Activated T-helper 1 cell treated with anti-CD3 and anti-CD28 coated beads, Interleukin-12 subunit alpha, Interleukin-12 subunit beta, Interleukin-2, Interleukin-4 antibody, amounts not matched to agents 30 ng/mL and 10 ng/mL and 1 ng/mL, durations not matched to agents 14 hours and 24 hours and 36 hours (primary cell): ENCODE measurements at regions of chrX and their contacts with region 1.

Region 1: GRCh38 chrX:78075787-78076389 is 28.2 kb upstream of the PGK1 start:
- DNase-seq: no peak
- H3K4me3 Mint-ChIP-seq: no peak overlapping the region
- H3K27ac Mint-ChIP-seq: peak overlapping the region; percentile 60
- H3K4me1 Mint-ChIP-seq: peaks cover 14% of the 10 kb centered on the region
- H3K27me3 Mint-ChIP-seq: no peaks in the 10 kb centered on the region

Region 2: DNA sequence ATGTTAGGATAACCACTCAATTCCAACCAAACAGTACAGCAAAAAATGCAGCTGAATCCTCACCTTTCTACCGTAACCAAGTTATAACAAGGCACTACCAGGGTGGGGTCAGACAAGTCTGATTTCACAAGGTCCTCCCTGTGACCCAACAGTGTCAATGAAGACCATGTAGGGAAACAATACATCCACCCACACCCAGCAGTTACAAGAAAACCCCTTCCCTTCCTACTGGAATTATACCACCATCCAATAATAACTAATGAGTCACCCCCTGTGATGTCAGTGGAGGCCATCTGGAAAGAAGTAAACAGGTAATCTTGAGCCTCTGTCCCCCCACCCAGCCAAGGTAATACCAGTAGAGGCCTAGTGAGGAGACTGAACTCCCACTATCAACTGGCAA is 511.1 kb before region 1 on chrX:
- intact Hi-C with region 1: no loop called
- DNase-seq: no peak
- H3K4me3 Mint-ChIP-seq: no peak overlapping the region
- H3K27ac Mint-ChIP-seq: no peak overlapping the region
- H3K4me1 Mint-ChIP-seq: no peaks in the 10 kb centered on the region
- H3K27me3 Mint-ChIP-seq: no peaks in the 10 kb centered on the region

Region 3: DNA sequence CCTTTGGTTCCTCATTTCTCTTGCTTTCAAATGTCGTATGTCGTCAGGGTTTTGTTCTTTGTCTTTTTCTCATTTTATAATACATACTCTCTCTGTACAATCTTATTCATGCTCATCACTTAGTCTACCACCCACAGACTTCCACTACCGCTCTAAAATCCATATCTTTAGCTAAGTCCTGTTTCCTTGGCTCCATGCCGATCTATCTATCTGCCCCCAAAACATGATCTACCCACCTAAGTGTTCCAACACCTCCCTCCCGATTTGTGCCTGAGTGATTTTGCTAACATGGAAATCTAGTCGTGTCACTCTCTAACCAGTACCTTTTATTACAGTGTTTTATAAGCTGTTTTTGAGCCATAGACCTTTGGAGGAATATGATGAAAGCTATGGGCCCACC is 40.8 kb before region 1 on chrX:
- intact Hi-C with region 1: loop called (anchors 5 kb)
- DNase-seq: no peak
- H3K4me3 Mint-ChIP-seq: no peak overlapping the region
- H3K27ac Mint-ChIP-seq: no peak overlapping the region
- H3K4me1 Mint-ChIP-seq: peaks cover 7% of the 10 kb centered on the region
- H3K27me3 Mint-ChIP-seq: no peaks in the 10 kb centered on the region